ENCODE measurements at regions of chr16 and their contacts with region 1.

Region 1: DNA sequence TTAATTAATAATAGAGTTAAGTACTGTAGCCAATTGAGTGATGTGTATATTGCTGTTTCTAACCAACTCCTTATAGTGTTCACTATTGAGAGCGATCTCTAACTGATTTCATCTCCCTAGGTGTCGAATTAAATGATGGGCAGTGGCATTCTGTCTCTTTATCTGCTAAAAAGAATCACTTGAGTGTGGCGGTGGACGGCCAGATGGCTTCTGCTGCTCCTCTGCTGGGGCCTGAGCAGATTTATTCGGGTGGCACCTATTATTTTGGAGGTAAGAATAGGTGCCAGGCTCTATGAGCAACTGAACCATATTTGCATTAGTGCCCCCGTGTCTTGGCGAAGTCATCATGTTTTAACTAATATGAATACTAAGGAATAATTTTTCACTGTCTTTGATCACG is 184.6 kb downstream of the CNTNAP4 start:
- DNase-seq: no peak

Region 2: DNA sequence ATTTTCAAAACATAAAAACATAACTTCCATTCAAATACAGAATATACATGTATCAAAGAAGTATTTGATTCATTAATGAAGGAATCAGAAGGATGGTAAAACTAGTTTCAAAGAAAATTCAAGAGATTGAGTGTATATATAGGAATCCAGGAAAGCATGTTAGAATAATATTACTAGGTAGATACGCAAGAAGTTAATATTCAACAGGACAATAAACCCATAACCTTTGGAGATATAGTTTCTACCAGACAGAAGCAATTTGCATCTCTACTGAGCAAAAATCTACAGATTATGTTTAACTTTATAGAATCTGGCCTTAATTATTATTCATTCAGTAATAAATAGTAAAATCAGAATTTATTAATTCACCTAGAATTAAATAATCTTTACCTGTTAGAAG is 17.9 kb before region 1 on chr16:
- intact Hi-C with region 1: loop called in 1 of 2 experiments (anchors 1 kb)
- DNase-seq: no peak

Measured in posterior vena cava (tissue), 2 donors.